Dendritic cell treated with granulocyte-macrophage colony-stimulating factor and Interleukin-4, amounts not matched to agents 40 ng/mL and 50 ng/mL, for 4 days (primary cell): ENCODE measurements at regions of chr3 and their contacts with region 1.

Region 1: GRCh38 chr3:141105828-141106628 is 54.9 kb downstream of the SPSB4 start:
- H3K4me3 Mint-ChIP-seq: no peak overlapping the region
- H3K27ac Mint-ChIP-seq: no peak overlapping the region
- H3K4me1 Mint-ChIP-seq: no peaks in the 10 kb centered on the region
- H3K27me3 Mint-ChIP-seq: no peaks in the 10 kb centered on the region

Region 2: DNA sequence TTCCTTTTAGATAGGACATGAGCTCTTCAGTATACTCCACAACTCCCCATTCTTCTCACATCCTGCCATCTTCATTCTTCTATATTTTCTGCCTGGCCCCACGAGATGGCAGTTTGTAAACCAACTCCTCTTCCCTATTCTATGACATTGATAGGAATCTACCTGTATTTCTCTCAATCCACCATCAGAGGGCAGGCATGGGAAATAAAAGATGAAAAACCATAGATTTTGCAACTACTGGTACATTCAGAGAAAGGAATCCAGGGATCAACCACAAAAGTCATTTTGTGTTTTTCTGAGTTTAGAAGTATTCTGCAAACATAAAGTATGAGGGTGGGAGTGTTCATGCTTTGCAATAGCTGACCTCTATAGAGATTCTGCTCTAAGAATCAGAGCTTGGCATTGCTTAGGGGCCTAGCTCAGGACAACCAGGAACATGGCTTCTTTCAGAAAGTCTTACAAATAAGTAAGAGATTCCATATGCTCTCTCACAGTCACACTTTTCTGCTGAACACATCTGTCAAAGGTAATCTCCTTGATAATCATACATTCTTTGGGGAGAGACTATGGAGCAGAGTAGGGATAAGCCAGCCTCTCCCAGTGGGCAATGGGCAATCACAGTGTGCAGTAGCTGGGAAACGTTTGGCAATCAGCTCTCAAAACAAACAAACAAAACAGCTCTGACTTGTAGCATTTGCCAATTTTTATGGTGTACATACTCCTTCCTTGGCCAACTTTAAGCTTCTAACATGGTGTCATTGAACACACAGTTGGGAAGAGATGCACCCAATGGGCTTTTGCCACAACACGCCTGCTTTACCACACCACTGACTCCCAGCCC is 207.5 kb before region 1 on chr3:
- intact Hi-C with region 1: loop called (anchors 2 kb)
- H3K4me3 Mint-ChIP-seq: no peak overlapping the region
- H3K27ac Mint-ChIP-seq: no peak overlapping the region
- H3K4me1 Mint-ChIP-seq: peaks cover 4% of the 10 kb centered on the region
- H3K27me3 Mint-ChIP-seq: no peaks in the 10 kb centered on the region

Region 3: DNA sequence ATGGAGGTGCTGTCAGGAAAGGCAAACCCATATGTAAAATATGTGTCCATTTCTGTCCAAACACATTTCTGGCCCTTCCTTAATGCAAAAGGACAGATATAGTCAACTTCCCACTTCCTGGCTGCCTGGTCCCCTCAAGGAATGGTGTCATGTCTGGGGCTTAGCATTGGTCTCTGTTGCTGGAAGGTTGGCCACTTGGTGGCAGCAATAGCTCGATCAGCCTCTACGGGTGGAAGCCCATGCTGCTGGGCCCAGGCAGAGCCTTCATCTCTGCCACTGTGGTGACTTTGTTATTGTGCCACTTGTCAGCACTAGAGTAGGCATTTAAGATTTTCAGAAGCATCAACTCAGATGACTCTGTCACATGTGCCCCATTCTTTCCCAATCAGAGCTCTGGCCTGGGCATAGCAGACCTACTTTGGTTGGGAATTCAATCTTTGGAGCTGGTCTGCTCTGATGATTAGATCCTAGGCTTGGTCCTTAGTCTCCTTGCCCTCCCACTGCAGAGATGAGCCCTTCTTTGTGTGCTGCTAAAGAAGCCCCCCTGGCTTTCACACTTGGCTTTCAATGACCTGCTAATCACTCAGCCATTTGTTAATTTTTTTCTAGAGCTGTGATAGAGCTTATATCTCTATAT is 105.9 kb before region 1 on chr3:
- intact Hi-C with region 1: loop called (anchors 1 kb)
- H3K4me3 Mint-ChIP-seq: no peak overlapping the region
- H3K27ac Mint-ChIP-seq: no peak overlapping the region
- H3K4me1 Mint-ChIP-seq: no peaks in the 10 kb centered on the region
- H3K27me3 Mint-ChIP-seq: no peaks in the 10 kb centered on the region

Region 4: DNA sequence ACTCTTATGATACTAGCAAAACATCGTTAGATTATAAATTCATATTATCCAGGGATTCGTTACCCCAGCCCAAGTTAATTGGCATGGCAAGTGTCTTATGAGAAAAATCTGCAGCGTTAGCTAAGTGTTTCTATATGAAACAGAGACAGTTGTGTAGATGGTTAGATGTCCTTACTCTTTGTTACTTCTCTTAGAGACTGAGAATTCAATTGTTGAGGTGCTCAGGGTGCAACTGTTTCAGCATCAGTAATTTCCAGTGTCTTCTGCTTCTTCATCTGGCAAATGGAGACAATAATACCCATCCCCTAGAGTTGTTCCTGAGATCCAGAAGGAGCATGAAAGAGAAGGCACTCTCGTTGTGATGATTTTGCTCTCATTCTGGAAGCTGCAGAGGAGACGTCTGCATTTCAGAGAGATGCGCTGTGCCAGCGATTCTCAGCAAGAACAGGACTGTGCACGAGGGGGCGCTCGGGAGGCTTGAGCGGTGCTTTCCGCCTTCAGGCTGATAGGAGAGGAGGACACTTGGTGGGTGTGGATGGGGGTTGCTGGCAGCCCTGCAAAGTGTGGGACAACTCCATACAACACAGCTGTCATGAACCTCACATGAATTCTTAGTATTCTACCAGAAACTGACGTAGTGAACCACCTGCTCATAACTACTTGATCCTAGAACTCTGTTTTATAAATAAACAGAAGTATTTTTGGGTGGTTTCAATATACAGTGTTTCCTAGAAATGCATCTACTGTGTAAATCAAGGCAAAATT is 94.6 kb before region 1 on chr3:
- intact Hi-C with region 1: loop called (anchors 1 kb)
- H3K4me3 Mint-ChIP-seq: no peak overlapping the region
- H3K27ac Mint-ChIP-seq: no peak overlapping the region
- H3K4me1 Mint-ChIP-seq: peaks cover 7% of the 10 kb centered on the region
- H3K27me3 Mint-ChIP-seq: peaks cover 5% of the 10 kb centered on the region